ENCODE measurements at regions of chr4 and their contacts with region 1.

Region 1: DNA sequence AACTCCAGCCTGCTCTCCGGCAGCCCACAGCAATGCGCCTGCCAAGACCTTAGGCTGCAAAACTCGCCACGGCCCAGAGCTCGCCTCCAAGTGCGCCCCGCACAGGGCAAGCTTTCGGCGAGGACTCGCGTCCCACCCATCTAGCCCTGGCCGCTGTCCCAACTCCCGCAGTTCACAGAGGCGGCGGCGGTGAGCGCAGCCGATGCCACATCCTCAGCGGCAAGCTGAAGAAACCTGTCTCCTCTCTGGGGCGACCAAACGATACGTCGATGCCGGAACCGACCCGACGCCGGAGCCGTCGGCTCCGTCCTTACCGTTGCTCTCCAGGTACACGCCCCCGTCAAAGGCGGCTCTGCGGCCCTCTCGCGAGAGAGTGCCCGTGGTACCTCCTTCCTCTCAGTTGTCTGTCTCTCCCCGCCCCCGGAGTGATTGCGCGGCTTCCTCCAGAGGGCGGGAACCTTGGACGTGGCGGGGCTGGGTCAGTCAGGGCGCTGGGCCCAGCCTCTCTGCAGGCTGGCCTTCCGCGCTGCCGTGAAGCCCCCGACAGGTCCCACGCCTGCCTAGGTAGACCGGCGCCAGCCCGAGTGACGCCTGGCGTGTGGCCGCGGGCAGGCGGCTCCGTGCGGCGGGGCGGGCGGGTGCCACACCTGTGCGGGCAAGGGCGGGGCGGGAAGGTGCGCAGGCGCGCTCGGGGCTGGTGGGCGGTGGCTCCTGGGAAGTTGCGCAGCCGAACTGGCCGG is 380 bp upstream of the RAB33B start:
- DNase-seq: peak; percentile 93 to 98 (median 96)
- ATAC-seq: peak; percentile 85
- H3K4me3 ChIP-seq: peak overlapping the region; percentile 90
- H3K4me3 Mint-ChIP-seq: peak overlapping the region; percentile 96
- H3K27ac ChIP-seq: peak overlapping the region; percentile 93
- H3K27ac Mint-ChIP-seq: peak overlapping the region; percentile 99
- H3K4me1 ChIP-seq: peaks cover 35% of the 10 kb centered on the region
- H3K4me1 Mint-ChIP-seq: peaks cover 80% of the 10 kb centered on the region
- H3K27me3 ChIP-seq: no peaks in the 10 kb centered on the region
- H3K27me3 Mint-ChIP-seq: no peaks in the 10 kb centered on the region
- CTCF ChIP-seq: peak; percentile 4

Region 2: DNA sequence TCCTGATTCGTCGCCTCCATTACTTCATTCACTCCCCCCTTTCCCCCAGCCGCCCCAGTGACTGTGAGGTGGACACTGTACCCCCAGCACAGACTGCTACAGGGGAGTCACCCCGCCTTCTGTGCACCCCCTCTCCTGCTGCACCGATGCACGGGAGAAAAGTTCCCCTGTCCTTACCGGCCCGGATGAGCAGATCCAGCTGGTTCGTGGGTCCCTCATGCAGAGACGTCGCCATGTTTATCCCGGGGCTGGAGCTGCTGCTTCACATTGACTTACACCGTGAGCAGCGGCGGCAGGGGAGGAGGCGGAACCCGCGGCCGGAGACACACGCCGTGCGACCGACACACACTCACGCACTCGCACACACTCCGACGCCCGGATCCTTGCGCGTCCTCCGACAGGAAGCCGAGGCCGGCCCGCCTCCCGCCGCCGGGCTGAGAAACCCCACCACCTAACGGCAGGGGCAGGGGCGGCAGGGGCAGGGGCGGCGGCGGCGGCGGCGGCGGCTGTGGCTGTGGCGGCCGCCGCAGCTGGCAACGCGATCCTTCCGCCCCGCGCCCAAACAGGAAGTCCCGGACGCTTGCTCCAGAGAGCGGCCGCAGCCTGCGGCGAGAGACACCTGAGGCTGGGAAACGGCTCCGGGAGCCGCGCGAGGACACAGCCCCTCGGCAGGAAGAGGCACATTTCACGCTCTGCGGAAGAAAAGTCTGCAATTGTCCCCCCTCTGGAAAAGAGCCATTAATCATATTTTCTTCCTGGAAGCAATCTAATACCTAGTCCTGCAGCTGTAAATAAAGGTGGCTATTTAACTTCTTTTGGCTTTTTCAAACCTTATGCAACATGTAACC is 369.4 kb before region 1 on chr4:
- CTCF ChIA-PET with region 1: no interaction called
- POLR2A ChIA-PET with region 1: interaction called, 6 read pairs
- intact Hi-C with region 1: loop called (anchors 2 to 5 kb)
- DNase-seq: peak; percentile 65 to 94 (median 80)
- ATAC-seq: peak; percentile 44
- H3K4me3 ChIP-seq: peak overlapping the region; percentile 93
- H3K4me3 Mint-ChIP-seq: peak overlapping the region; percentile 93
- H3K27ac ChIP-seq: peak overlapping the region; percentile 94 to 96
- H3K27ac Mint-ChIP-seq: peak overlapping the region; percentile 92
- H3K4me1 ChIP-seq: peaks cover 5% of the 10 kb centered on the region
- H3K4me1 Mint-ChIP-seq: peaks cover 55% of the 10 kb centered on the region
- H3K27me3 ChIP-seq: no peaks in the 10 kb centered on the region
- H3K27me3 Mint-ChIP-seq: no peaks in the 10 kb centered on the region
- CTCF ChIP-seq: no peak

Region 3: DNA sequence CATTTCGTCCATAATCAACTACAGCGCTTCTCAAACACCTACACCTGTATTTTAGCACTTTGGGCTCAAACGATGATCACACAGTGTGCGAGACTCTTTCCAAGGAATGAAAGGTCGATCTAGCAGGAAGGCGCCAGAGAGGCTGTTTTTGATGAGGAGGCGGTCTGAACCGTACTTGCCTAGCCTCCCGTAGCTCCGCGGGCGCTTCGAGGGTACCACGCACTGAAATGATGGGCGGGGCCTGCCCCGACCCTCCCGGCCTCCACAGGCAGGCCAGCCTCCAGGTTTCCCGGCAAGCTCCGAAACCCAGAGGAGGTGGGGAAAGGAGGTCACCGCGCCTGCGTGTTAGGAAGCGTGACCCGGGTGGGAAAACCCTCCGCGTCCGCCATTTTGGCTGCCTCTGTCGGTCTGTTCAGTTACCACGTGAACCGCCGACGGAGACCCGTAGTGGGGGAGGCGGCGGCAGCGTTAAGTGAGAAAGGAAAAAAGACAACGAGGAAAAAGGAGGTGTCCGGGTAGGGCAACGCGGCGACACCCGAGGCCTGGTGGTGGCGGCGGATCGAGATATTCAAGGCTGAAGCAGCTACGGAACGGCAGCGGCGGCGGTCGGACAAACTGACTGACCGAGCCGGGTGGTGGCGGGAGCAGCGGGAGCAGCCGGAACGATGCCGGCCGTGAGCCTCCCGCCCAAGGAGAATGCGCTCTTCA is 152.3 kb before region 1 on chr4 and contains the start of gene NAA15:
- CTCF ChIA-PET with region 1: no interaction called
- POLR2A ChIA-PET with region 1: interaction called, 33 read pairs
- intact Hi-C with region 1: loop called (anchors 2 kb)
- DNase-seq: peak; percentile 95 to 99 (median 96)
- ATAC-seq: peak; percentile 86
- H3K4me3 ChIP-seq: peak within 1 kb of the TSS; percentile 91
- H3K4me3 Mint-ChIP-seq: peak within 1 kb of the TSS; percentile 95
- H3K27ac ChIP-seq: peak within 1 kb of the TSS; percentile 97 to 98
- H3K27ac Mint-ChIP-seq: peak within 1 kb of the TSS; percentile 94
- H3K4me1 ChIP-seq: peaks cover 26% of the 10 kb centered on the region
- H3K4me1 Mint-ChIP-seq: peaks cover 67% of the 10 kb centered on the region
- H3K27me3 ChIP-seq: no peaks in the 10 kb centered on the region
- H3K27me3 Mint-ChIP-seq: no peaks in the 10 kb centered on the region
- CTCF ChIP-seq: no peak
- total RNA-seq, gene NAA15: 54.2 to 57.1 TPM

Region 4: GRCh38 chr4:140373328-140374129 is 920.0 kb after region 1 on chr4 and contains the start of gene SCOC:
- CTCF ChIA-PET with region 1: interaction called, 3 read pairs
- POLR2A ChIA-PET with region 1: no interaction called
- intact Hi-C with region 1: loop called in 1 of 2 experiments (anchors 10 kb)
- DNase-seq: peak; percentile 90 to 98 (median 94)
- ATAC-seq: peak; percentile 95
- H3K4me3 ChIP-seq: peak within 1 kb of the TSS; percentile 94
- H3K4me3 Mint-ChIP-seq: peak within 1 kb of the TSS; percentile 87
- H3K27ac ChIP-seq: peak within 1 kb of the TSS; percentile 65 to 83
- H3K27ac Mint-ChIP-seq: no peak within 1 kb of the TSS
- H3K4me1 ChIP-seq: peaks cover 14% of the 10 kb centered on the region
- H3K4me1 Mint-ChIP-seq: peaks cover 32% of the 10 kb centered on the region
- H3K27me3 ChIP-seq: no peaks in the 10 kb centered on the region
- H3K27me3 Mint-ChIP-seq: no peaks in the 10 kb centered on the region
- CTCF ChIP-seq: no peak
- total RNA-seq, gene SCOC: 5.9 to 6.8 TPM

Region 5: DNA sequence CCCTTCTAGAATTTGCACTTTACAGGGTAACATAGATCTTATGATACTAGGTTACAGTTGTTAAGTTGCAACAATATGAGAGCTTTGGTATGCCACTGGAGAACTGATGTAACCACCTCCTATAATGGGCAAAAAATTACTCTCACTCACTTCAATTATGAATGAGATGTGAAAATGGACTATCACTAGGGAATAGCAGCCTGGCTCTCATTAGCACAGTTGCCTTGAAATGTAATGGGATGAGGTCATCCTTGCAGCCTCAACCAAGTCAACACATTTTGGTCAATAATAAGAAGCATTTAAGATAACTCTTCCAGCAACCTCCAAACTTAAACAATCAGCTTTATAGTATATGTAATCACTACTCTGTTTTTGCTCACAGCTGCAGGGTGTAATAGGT is 1233.3 kb after region 1 on chr4:
- CTCF ChIA-PET with region 1: no interaction called
- POLR2A ChIA-PET with region 1: no interaction called
- intact Hi-C with region 1: no loop called
- DNase-seq: no peak
- ATAC-seq: no peak
- H3K4me3 ChIP-seq: no peak overlapping the region
- H3K4me3 Mint-ChIP-seq: no peak overlapping the region
- H3K27ac ChIP-seq: no peak overlapping the region
- H3K27ac Mint-ChIP-seq: no peak overlapping the region
- H3K4me1 ChIP-seq: no peaks in the 10 kb centered on the region
- H3K4me1 Mint-ChIP-seq: no peaks in the 10 kb centered on the region
- H3K27me3 ChIP-seq: peaks cover 0 to 3% of the 10 kb centered on the region in 2 experiments
- H3K27me3 Mint-ChIP-seq: peaks cover 21% of the 10 kb centered on the region
- CTCF ChIP-seq: no peak

Measured in CD4-positive, alpha-beta T cell (primary cell).